ENCODE measurements at regions of chr1 and their contacts with region 1.

Region 1: DNA sequence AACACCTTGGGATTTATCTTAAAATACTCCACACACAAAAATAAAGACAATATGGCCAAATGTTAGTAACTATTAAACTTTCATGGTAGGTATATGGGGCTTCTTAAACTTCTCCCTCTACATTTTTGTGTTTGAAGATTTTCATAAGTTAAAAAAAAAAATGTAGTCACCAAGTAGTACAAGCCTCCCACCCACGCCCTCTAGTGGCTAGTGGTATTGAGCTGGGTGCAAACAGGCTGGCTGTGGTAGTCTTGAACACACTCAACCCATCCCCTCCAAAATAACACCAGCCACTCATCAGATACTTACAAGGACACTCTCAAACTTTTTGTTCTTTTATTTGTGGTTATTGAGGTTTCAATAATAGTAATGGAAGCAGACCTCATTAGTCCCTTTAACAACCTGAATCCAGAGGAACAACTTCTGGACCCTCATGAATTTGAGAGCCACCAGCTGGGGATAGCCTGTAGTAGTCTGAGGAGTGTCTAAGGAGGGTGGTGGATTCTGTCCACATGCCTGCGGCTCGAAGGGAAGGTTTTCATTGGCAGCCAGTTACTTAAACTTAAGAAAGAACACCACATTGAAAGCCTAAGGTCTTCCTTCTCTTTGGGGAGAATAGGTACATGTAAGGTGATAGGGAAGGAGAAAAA is 15.6 kb downstream of the RD3 start:
- DNase-seq: peak in 6 of 10 donors; percentile 45 to 67 (median 56)
- H3K4me3 ChIP-seq: no peak overlapping the region
- H3K27ac ChIP-seq: no peak overlapping the region
- H3K27me3 ChIP-seq: peaks cover 0 to 28% (median 4%) of the 10 kb centered on the region in 45 donors
- CTCF ChIP-seq: peak in 55 of 56 donors; percentile 59 to 86 (median 73)

Region 2: GRCh38 chr1:210407207-210407886 is 1069.0 kb before region 1 on chr1:
- intact Hi-C with region 1: loop called in 1 of 2 experiments (anchors 5 kb)
- DNase-seq: peak; percentile 70 to 90 (median 84)
- H3K4me3 ChIP-seq: no peak overlapping the region
- H3K27ac ChIP-seq: no peak overlapping the region
- H3K27me3 ChIP-seq: no peaks in the 10 kb centered on the region
- CTCF ChIP-seq: peak; percentile 92 to 100 (median 97)

Region 3: GRCh38 chr1:211359876-211360275 is 116.4 kb before region 1 on chr1:
- intact Hi-C with region 1: no loop called
- DNase-seq: no peak
- H3K4me3 ChIP-seq: no peak overlapping the region
- H3K27ac ChIP-seq: peak overlapping the region in 17 of 59 donors; percentile 3 to 59 (median 48)
- H3K27me3 ChIP-seq: no peaks in the 10 kb centered on the region
- CTCF ChIP-seq: no peak

Region 4: DNA sequence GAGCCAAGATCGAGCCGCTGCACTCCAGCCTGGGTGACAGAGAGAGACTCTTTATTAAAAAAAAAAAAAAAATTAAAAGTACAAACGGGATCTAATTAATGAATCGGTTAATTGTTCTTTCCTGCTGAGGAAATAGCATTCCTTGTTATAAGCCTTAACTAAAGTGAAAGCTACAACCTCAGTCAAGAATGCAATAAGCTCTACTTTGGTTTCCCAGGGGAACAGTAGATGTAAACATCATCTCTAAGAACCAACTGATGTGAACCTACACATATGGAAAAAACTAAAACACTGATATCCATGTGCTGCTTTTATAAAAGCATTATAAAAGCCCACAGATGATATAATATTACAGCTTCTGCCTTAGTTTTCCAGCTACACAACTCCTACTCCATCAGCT is 312.3 kb after region 1 on chr1:
- intact Hi-C with region 1: no loop called
- DNase-seq: no peak
- H3K4me3 ChIP-seq: peak overlapping the region in 3 of 59 donors; percentile 3 to 12 (median 4)
- H3K27ac ChIP-seq: peak overlapping the region in 53 of 59 donors; percentile 20 to 95 (median 82)
- H3K27me3 ChIP-seq: no peaks in the 10 kb centered on the region
- CTCF ChIP-seq: no peak

Measured in dorsolateral prefrontal cortex (tissue), 120 donors.